Mammary epithelial cell (primary cell): ENCODE measurements at regions of chr12 and their contacts with region 1.

Region 1: GRCh38 chr12:66571361-66571915 is 107.4 kb downstream of the GRIP1 start:
- DNase-seq: no peak
- H3K4me3 ChIP-seq: no peak overlapping the region
- H3K27ac ChIP-seq: no peak overlapping the region
- H3K4me1 ChIP-seq: no peaks in the 10 kb centered on the region
- H3K27me3 ChIP-seq: no peaks in the 10 kb centered on the region
- CTCF ChIP-seq: no peak

Region 2: DNA sequence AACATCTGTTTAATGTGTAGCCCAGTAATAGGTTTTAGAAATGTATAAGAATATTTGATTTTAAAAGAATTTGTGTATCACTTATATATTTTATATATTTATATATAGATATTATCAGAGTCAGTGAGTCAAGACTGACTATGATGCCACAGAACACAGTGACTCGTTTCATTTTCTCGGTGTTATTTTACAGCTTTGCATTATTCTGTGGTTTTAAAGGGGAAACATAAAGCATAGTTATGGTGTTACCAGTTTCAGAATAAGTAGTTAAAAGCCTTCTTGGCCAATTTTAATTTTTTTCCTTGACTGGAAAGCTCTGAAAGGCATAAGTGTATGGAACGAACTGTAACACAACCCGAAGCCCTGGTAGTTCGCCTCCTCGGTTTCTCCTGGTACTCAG is 16.5 kb after region 1 on chr12:
- CTCF ChIA-PET with region 1: no interaction called
- dilution Hi-C with region 1: no loop called
- in situ Hi-C with region 1: no loop called
- intact Hi-C with region 1: loop called (anchors 2 kb)
- DNase-seq: peak; percentile 69
- H3K4me3 ChIP-seq: no peak overlapping the region
- H3K27ac ChIP-seq: no peak overlapping the region
- H3K4me1 ChIP-seq: no peaks in the 10 kb centered on the region
- H3K27me3 ChIP-seq: no peaks in the 10 kb centered on the region
- CTCF ChIP-seq: no peak